Transverse colon (tissue), 4 donors: ENCODE measurements at regions of chr15 and their contacts with region 1.

Region 1: GRCh38 chr15:29904757-29905417 is 82.6 kb upstream of the TJP1 start:
- DNase-seq: no peak
- H3K4me3 ChIP-seq: no peak overlapping the region
- H3K27ac ChIP-seq: no peak overlapping the region
- H3K4me1 ChIP-seq: peaks cover 0 to 7% (median 2%) of the 10 kb centered on the region in 4 donors
- H3K27me3 ChIP-seq: no peaks in the 10 kb centered on the region
- CTCF ChIP-seq: no peak
- EP300 ChIP-seq: no peak
- POLR2A ChIP-seq: no peak

Region 2: GRCh38 chr15:29935276-29936020 is 30.6 kb after region 1 on chr15:
- in situ Hi-C with region 1: no loop called
- intact Hi-C with region 1: loop called (anchors 1 kb)
- DNase-seq: peak; percentile 70
- H3K4me3 ChIP-seq: no peak overlapping the region
- H3K27ac ChIP-seq: no peak overlapping the region
- H3K4me1 ChIP-seq: peaks cover 0 to 14% (median 0%) of the 10 kb centered on the region in 4 donors
- H3K27me3 ChIP-seq: no peaks in the 10 kb centered on the region
- CTCF ChIP-seq: peak; percentile 17 to 60 (median 44)
- EP300 ChIP-seq: no peak
- POLR2A ChIP-seq: no peak